Activated CD8-positive, alpha-beta T cell treated with anti-CD3 and anti-CD28 coated beads, Interleukin-2, amount 10 ng/mL, durations not matched to agents 7 days and 5 days (primary cell): ENCODE measurements at regions of chr6 and their contacts with region 1.

Region 1: GRCh38 chr6:35297601-35298481 is at the start of gene DEF6:
- DNase-seq: peak; percentile 94
- ATAC-seq: peak; percentile 83
- H3K4me3 Mint-ChIP-seq: peak within 1 kb of the TSS; percentile 90
- H3K27ac Mint-ChIP-seq: peak within 1 kb of the TSS; percentile 98
- H3K4me1 Mint-ChIP-seq: peaks cover 50% of the 10 kb centered on the region
- H3K27me3 Mint-ChIP-seq: no peaks in the 10 kb centered on the region
- total RNA-seq, gene DEF6: 191 to 195 TPM

Region 2: GRCh38 chr6:35202066-35202546 is 95.7 kb before region 1 on chr6:
- CTCF ChIA-PET with region 1: no interaction called
- POLR2A ChIA-PET with region 1: no interaction called
- DNase-seq: no peak
- ATAC-seq: no peak
- H3K4me3 Mint-ChIP-seq: no peak overlapping the region
- H3K27ac Mint-ChIP-seq: no peak overlapping the region
- H3K4me1 Mint-ChIP-seq: no peaks in the 10 kb centered on the region
- H3K27me3 Mint-ChIP-seq: peaks cover 43% of the 10 kb centered on the region

Region 3: DNA sequence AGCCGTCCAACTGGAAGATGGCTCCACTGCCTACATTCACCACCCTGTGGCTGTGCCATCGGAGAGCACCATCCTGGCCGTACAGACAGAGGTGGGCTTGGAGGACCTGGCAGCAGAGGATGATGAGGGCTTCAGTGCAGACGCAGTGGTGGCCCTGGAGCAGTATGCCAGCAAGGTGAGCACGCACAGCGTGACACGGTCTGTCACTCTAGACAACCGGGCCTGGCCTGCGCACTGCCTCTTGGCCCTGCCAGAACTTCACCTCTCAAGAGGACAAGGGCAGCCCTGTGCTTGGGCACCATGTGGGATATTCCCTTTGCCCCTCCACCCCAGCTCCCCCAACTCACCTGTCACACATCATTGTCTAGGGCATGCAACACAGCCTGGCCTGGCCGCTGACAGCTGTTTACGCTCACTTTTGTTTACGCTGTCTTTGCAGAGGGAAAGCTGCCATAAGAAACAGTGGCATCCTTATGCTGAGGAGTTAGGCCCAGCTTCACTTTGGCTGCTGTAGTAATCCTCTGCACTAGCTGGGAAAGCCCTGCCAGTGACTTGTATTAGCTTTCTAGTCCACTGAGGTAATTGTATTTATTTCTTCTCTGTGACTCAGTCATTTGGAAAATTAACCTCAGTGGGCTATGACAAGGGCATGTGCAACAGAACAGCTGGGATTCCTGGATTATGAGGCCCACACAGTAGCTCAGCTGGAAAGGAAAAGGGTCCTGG is 10.0 kb before region 1 on chr6:
- CTCF ChIA-PET with region 1: interaction called, 10 read pairs
- POLR2A ChIA-PET with region 1: interaction called, 3 read pairs
- DNase-seq: no peak
- ATAC-seq: no peak
- H3K4me3 Mint-ChIP-seq: no peak overlapping the region
- H3K27ac Mint-ChIP-seq: no peak overlapping the region
- H3K4me1 Mint-ChIP-seq: no peaks in the 10 kb centered on the region
- H3K27me3 Mint-ChIP-seq: no peaks in the 10 kb centered on the region

Region 4: DNA sequence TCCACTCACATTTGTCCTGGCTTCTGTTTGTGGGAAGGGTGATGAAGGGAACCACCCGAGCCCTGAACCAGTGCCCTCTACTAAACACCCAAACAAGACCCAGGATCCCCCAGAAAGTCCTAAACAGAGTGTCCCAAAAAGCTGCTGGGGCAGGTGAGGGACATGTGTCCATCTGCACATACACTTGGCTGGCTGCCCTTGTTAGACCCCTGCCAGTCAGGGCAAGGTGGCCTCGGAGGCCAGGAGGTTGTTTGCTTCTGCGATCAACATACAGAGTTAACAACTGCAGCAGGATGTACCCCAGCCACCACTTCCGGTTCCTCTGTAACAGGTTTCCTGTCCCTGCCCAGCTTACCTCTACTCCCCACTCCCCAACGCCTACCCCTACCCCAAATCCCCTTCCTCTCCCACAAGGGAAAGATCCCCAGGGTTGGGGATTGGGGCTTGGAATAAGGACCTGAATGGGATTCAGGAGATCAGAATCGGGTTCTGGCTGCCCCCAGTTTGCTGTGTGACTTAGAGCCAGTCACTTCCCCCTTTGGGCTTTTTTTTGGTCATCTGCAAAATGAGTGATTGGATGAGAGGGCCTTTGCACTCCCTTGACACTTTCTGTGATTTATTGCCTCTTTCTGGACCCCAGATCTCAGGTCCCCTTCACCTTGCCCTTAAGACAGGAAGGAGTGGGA is 13.7 kb after region 1 on chr6:
- CTCF ChIA-PET with region 1: interaction called, 446 read pairs
- POLR2A ChIA-PET with region 1: interaction called, 59 read pairs
- DNase-seq: peak; percentile 78
- ATAC-seq: peak; percentile 88
- H3K4me3 Mint-ChIP-seq: peak overlapping the region; percentile 65
- H3K27ac Mint-ChIP-seq: peak overlapping the region; percentile 96
- H3K4me1 Mint-ChIP-seq: peaks cover 86% of the 10 kb centered on the region
- H3K27me3 Mint-ChIP-seq: no peaks in the 10 kb centered on the region

Region 5: GRCh38 chr6:35327349-35328027 is 29.6 kb after region 1 on chr6:
- CTCF ChIA-PET with region 1: interaction called, 446 read pairs
- POLR2A ChIA-PET with region 1: interaction called, 40 read pairs
- DNase-seq: peak; percentile 84
- ATAC-seq: peak; percentile 95
- H3K4me3 Mint-ChIP-seq: no peak overlapping the region
- H3K27ac Mint-ChIP-seq: peak overlapping the region; percentile 77
- H3K4me1 Mint-ChIP-seq: peaks cover 23% of the 10 kb centered on the region
- H3K27me3 Mint-ChIP-seq: no peaks in the 10 kb centered on the region

Region 6: DNA sequence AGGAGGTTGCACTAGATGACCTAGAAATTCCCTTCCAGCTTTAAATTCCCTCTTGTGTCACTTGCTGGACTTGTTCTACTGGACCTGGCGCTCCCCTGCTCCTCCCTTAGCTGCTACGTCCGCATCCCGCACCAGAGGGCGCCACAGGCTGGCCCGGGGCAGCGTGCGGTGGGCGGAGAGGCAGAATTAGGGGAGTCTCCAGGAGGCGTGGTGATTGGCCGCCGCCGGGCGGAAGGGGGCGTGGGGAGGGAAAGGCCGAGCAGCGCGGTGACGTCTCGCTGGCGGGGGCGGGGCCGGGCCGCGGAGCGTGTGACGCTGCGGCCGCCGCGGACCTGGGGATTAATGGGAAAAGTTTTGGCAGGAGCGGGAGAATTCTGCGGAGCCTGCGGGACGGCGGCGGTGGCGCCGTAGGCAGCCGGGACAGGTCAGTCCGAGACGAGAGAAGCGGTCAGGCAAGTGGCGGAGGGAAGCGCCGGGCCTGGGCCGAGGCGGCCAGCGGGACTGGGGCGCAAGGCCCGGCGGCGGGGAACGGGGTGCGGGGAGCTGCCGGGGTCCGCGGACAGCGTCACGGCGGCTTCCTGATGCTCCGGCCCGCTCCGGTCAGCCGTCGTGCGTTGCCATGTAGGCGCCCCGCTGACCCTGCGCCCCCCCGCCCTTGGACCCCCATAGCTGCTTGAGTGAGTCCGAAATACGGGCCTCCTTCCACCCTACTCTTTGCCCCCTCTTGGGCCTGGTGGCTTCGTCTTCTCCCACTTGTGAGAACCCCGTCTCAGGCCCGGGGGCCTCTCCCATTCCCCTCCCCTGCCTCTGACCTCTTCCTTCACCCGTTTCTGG is 44.6 kb after region 1 on chr6 and contains the start of gene PPARD:
- CTCF ChIA-PET with region 1: interaction called, 47 read pairs
- POLR2A ChIA-PET with region 1: interaction called, 6 read pairs
- DNase-seq: peak; percentile 98
- ATAC-seq: peak; percentile 99
- H3K4me3 Mint-ChIP-seq: peak within 1 kb of the TSS; percentile 90
- H3K27ac Mint-ChIP-seq: peak within 1 kb of the TSS; percentile 92
- H3K4me1 Mint-ChIP-seq: peaks cover 51% of the 10 kb centered on the region
- H3K27me3 Mint-ChIP-seq: peaks cover 4% of the 10 kb centered on the region
- total RNA-seq, gene PPARD: 36.3 to 36.7 TPM

Region 7: GRCh38 chr6:35452186-35453090 is 154.6 kb after region 1 on chr6 and contains the start of gene FANCE:
- CTCF ChIA-PET with region 1: interaction called, 149 read pairs
- POLR2A ChIA-PET with region 1: interaction called, 4 read pairs
- DNase-seq: peak; percentile 93
- ATAC-seq: peak; percentile 84
- H3K4me3 Mint-ChIP-seq: peak within 1 kb of the TSS; percentile 83
- H3K27ac Mint-ChIP-seq: peak within 1 kb of the TSS; percentile 75
- H3K4me1 Mint-ChIP-seq: peaks cover 50% of the 10 kb centered on the region
- H3K27me3 Mint-ChIP-seq: peaks cover 4% of the 10 kb centered on the region
- total RNA-seq, gene FANCE: 20.4 to 21.9 TPM

Region 8: DNA sequence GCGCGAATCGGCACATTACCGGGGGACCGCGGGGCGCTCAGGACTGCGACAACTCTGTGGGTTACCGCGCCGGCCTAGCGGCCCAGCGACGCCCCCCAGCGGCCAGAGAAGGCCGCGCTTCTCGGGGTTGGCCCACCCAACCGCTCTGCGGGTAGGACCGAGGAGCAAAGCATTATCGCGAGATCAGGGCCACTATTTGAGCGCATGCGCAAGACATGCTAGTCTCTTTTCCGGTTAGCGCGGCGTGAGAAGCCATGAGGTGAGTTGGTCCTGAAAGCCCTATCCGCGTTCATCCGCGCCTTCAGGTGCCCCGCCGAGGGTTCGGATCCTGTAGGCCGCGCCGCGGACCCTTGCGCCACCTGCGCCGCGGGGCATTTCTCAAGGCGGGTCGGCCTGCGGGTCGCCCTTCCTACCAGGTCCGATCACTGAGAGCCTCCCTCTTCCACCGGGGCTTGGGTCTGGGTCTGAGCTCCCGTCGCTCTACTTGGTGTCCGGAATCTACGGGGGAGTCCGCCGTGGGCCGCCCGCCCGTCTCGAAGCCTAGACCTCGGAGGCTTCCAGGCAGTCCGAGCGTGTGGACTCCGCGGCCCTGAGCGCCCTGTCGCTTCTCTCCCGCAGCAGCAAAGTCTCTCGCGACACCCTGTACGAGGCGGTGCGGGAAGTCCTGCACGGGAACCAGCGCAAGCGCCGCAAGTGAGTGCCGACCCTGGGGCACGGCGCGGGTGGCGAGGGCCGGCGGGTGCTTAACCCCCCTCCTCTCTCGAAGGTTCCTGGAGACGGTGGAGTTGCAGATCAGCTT is 170.5 kb after region 1 on chr6 and contains the start of gene RPL10A:
- CTCF ChIA-PET with region 1: interaction called, 45 read pairs
- POLR2A ChIA-PET with region 1: interaction called, 18 read pairs
- DNase-seq: peak; percentile 98
- ATAC-seq: peak; percentile 89
- H3K4me3 Mint-ChIP-seq: peak within 1 kb of the TSS; percentile 83
- H3K27ac Mint-ChIP-seq: peak within 1 kb of the TSS; percentile 99
- H3K4me1 Mint-ChIP-seq: peaks cover 39% of the 10 kb centered on the region
- H3K27me3 Mint-ChIP-seq: no peaks in the 10 kb centered on the region
- total RNA-seq, gene RPL10A: 1,398 to 1,443 TPM